ENCODE measurements at regions of chr19 and their contacts with region 1.

Region 1: DNA sequence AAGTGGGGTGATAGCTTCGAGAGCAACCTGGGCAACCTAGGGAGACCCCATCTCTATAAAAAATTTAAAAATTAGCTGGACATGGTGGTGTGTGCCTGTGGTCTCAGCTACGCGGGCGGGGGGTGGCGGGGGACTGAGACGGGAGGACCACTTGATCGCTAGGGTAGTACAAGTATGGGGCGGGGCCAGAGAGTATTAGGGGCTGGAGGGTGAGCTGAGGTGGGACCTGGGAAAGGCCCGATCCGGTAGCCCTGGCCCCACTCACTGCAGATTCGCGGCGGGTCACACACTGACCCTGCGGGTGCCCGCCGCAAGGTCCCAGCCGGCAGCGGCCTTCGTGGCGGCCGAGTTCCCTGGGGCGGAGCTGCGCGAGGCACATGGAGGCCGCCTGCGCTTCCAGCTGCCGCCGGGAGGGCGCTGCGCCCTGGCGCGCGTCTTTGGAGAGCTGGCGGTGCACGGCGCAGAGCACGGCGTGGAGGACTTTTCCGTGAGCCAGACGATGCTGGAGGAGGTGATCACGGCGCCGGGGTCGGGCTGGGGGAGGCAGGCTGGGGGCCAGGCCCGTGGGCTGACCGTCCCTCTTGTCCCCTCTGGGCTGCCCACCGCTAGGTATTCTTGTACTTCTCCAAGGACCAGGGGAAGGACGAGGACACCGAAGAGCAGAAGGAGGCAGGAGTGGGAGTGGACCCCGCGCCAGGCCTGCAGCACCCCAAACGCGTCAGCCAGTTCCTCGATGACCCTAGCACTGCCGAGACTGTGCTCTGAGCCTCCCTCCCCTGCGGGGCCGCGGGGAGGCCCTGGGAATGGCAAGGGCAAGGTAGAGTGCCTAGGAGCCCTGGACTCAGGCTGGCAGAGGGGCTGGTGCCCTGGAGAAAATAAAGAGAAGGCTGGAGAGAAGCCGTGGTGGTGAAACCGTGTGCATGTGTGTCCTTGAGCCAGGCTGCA is 2.0 kb upstream of the ARHGAP45 start:
- DNase-seq: peak; percentile 81
- H3K4me3 Mint-ChIP-seq: peak overlapping the region; percentile 47
- H3K27ac Mint-ChIP-seq: peak overlapping the region; percentile 51
- H3K4me1 Mint-ChIP-seq: peaks cover 42% of the 10 kb centered on the region
- H3K27me3 Mint-ChIP-seq: no peaks in the 10 kb centered on the region

Region 2: DNA sequence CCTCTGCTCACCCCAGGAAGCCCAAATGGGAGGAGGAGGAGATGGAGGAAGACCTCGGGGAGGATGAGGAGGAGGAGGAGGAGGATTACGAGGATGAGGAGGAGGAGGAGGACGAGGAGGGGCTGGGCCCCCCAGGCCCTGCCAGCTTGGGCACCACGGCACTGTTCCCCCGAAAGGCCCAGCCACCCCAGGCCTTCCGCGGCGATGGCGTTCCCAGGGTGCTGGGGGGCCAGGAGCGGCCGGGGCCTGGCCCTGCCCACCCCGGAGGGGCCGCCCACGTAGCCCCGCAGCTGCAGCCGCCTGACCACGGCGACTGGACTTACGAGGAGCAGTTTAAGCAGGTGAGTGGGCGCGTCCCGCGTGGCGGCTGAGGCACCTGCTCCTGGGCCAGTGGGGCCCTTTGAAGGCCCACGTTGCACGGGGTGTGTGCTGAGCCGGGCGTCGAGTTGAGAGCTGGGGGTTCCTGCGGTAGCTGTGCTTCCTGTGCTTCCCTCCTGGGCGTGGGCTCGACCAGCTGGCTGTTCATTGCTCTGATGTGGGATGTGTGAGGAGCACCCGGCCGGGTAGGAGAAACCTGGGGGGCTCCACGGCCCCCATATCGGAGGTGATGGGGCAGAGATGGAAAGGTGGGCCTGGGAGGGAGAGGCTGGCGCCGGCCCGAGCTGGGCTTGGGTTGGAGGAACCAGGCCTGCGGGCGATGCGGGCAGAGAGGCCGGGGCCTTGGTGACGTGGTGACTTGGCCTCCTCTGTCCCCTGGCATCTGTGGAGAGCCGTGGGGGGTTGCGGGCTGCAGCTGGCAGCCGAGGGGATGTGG is 132.3 kb before region 1 on chr19:
- CTCF ChIA-PET with region 1: no interaction called
- POLR2A ChIA-PET with region 1: no interaction called
- DNase-seq: peak; percentile 31
- H3K4me3 Mint-ChIP-seq: peak overlapping the region; percentile 63
- H3K27ac Mint-ChIP-seq: peak overlapping the region; percentile 64
- H3K4me1 Mint-ChIP-seq: peaks cover 18% of the 10 kb centered on the region
- H3K27me3 Mint-ChIP-seq: no peaks in the 10 kb centered on the region

Region 3: GRCh38 chr19:1026189-1027019 is 38.5 kb before region 1 on chr19 and contains the start of gene CNN2:
- CTCF ChIA-PET with region 1: interaction called, 6 read pairs
- POLR2A ChIA-PET with region 1: interaction called, 70 read pairs
- DNase-seq: peak; percentile 78
- H3K4me3 Mint-ChIP-seq: peak within 1 kb of the TSS; percentile 97
- H3K27ac Mint-ChIP-seq: peak within 1 kb of the TSS; percentile 95
- H3K4me1 Mint-ChIP-seq: peaks cover 33% of the 10 kb centered on the region
- H3K27me3 Mint-ChIP-seq: no peaks in the 10 kb centered on the region
- total RNA-seq, gene CNN2: 513 to 519 TPM

Region 4: GRCh38 chr19:1046836-1047695 is 17.9 kb before region 1 on chr19:
- CTCF ChIA-PET with region 1: interaction called, 3 read pairs
- POLR2A ChIA-PET with region 1: interaction called, 10 read pairs
- DNase-seq: peak; percentile 69
- H3K4me3 Mint-ChIP-seq: no peak overlapping the region
- H3K27ac Mint-ChIP-seq: no peak overlapping the region
- H3K4me1 Mint-ChIP-seq: peaks cover 17% of the 10 kb centered on the region
- H3K27me3 Mint-ChIP-seq: no peaks in the 10 kb centered on the region

Region 5: GRCh38 chr19:1103708-1104310 is 38.9 kb after region 1 on chr19 and contains the start of gene GPX4:
- CTCF ChIA-PET with region 1: interaction called, 3 read pairs
- POLR2A ChIA-PET with region 1: interaction called, 31 read pairs
- DNase-seq: peak; percentile 99
- H3K4me3 Mint-ChIP-seq: peak within 1 kb of the TSS; percentile 69
- H3K27ac Mint-ChIP-seq: peak within 1 kb of the TSS; percentile 89
- H3K4me1 Mint-ChIP-seq: peaks cover 47% of the 10 kb centered on the region
- H3K27me3 Mint-ChIP-seq: no peaks in the 10 kb centered on the region
- total RNA-seq, gene GPX4: 141 to 148 TPM

Region 6: DNA sequence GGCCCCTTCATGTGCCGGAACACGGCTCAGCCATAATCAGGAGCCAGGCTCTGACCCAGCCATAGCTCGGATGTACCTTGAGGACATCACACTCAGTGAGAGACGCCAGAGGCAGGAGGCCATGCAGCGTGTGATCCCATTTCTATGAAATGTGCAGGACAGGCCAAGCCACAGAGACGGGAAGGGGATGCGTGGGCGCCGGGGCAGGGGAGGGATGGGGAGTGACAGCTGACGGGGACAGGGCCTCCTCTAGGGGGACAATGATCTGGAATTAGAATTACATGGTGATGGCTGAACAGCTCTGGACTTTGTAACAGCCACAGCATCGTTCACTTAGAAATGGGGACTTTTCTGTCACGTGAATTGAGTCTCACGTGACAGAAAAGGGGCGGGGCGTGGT is 74.2 kb after region 1 on chr19:
- CTCF ChIA-PET with region 1: no interaction called
- POLR2A ChIA-PET with region 1: no interaction called
- DNase-seq: no peak
- H3K4me3 Mint-ChIP-seq: no peak overlapping the region
- H3K27ac Mint-ChIP-seq: no peak overlapping the region
- H3K4me1 Mint-ChIP-seq: peaks cover 7% of the 10 kb centered on the region
- H3K27me3 Mint-ChIP-seq: no peaks in the 10 kb centered on the region

Region 7: GRCh38 chr19:1205114-1206062 is 140.5 kb after region 1 on chr19 and contains the start of gene STK11:
- CTCF ChIA-PET with region 1: no interaction called
- POLR2A ChIA-PET with region 1: no interaction called
- DNase-seq: peak; percentile 100
- H3K4me3 Mint-ChIP-seq: peak within 1 kb of the TSS; percentile 92
- H3K27ac Mint-ChIP-seq: peak within 1 kb of the TSS; percentile 85
- H3K4me1 Mint-ChIP-seq: peaks cover 36% of the 10 kb centered on the region
- H3K27me3 Mint-ChIP-seq: no peaks in the 10 kb centered on the region
- total RNA-seq, gene STK11: 84.2 to 85.1 TPM

Measured in activated CD4-positive, alpha-beta memory T cell treated with anti-CD3 and anti-CD28 coated beads, Interleukin-2, amount 10 ng/mL, durations not matched to agents 7 days and 5 days (primary cell).